Activated CD4-positive, alpha-beta T cell treated with anti-CD3 and anti-CD28 coated beads, Interleukin-2, amount 10 ng/mL, durations not matched to agents 24 days and 14 days (primary cell): ENCODE measurements at regions of chr14 and their contacts with region 1.

Region 1: GRCh38 chr14:69398053-69398817 is at the starts of genes ERH and SLC39A9:
- DNase-seq: peak; percentile 98
- H3K4me3 Mint-ChIP-seq: peak within 1 kb of the TSS; percentile 94
- H3K27ac Mint-ChIP-seq: peak within 1 kb of the TSS; percentile 98
- H3K4me1 Mint-ChIP-seq: peaks cover 49% of the 10 kb centered on the region
- H3K27me3 Mint-ChIP-seq: no peaks in the 10 kb centered on the region
- total RNA-seq, gene ERH: 434 and 441 TPM in 2 replicates
- total RNA-seq, gene SLC39A9: 49.5 and 53.4 TPM in 2 replicates

Region 2: DNA sequence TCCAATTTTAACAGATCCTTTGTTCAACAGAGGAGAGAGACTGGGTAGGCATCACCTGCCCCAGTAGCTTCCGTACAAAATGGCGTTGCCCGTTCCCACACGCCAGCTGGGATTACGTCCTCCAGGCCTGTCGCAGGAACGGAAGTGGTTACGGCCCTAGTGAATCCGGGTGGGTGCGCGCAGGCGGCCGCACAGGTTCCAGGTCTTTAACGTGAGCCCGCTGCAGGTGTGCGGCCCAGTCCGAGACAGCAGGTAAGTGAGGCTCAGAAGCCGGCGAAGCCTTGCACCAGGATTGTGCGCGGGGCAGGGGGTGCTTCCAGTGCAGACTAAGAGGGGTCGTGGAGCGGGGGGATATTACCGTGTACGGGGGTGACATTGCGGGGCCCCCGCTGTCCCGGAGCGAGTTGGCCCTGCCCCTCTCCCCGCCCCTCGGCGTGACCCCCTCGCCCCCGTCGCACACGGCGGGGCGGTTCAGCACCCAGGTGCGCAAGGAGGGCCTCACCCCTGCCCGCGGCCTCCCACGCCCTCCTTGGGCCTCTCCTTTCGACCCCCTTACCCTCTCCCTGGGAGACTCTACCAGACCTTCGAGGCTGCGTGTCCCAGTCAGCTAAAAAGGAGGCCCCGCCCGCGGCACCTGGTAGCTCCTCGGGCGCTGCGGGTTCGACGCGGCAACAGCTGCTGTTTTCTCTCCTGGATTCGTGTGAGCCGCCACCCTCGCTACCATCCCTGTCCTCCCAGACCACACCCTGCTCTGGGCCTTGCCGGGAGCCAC is 206.7 kb before region 1 on chr14 and contains the start of gene EXD2:
- intact Hi-C with region 1: loop called (anchors 1 kb)
- DNase-seq: peak; percentile 87
- H3K4me3 Mint-ChIP-seq: peak within 1 kb of the TSS; percentile 93
- H3K27ac Mint-ChIP-seq: peak within 1 kb of the TSS; percentile 83
- H3K4me1 Mint-ChIP-seq: peaks cover 11% of the 10 kb centered on the region
- H3K27me3 Mint-ChIP-seq: peaks cover 11% of the 10 kb centered on the region
- total RNA-seq, gene EXD2: 6.3 and 7.5 TPM in 2 replicates

Region 3: DNA sequence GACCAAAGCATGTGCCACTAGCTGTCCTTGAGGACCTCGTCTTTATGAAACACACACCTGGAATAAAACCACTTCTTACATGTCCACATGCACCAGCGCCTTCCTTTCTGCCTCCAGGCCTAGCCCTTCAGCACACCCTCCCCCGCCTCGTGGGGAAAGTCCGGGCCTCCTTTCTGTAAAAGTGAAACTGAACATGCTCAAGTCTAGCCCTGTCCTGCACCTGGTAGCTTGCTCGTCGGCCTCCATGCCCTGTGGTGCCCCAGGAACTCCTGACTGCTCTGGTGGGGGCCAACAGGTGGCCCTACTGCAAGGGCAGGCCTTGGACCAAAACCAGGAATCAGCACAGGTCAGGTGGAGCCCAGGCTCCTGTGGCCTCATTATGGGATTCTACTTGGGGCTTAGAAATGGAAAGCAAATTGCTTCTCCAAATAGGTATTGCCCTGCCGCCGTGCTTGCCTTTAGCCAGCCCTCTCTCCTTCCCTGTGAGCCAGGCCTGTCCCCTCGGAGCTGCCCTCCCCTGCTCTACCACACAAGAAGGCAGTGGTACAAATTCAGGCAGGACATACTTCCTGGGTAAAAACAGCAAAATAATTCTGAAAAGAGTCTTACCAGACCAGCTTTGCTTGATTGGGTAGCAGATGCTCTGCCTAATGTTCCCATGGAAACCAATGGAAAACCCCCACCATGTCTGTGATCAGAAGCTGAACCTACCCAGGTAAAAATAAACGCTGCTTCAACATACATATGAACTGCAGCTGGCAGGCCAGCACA is 43.7 kb before region 1 on chr14:
- intact Hi-C with region 1: loop called (anchors 2 kb)
- DNase-seq: peak; percentile 93
- H3K4me3 Mint-ChIP-seq: peak overlapping the region; percentile 72
- H3K27ac Mint-ChIP-seq: peak overlapping the region; percentile 84
- H3K4me1 Mint-ChIP-seq: peaks cover 32% of the 10 kb centered on the region
- H3K27me3 Mint-ChIP-seq: no peaks in the 10 kb centered on the region